H1 (cell line): ENCODE measurements at regions of chr14 and their contacts with region 1.

Region 1: GRCh38 chr14:103104654-103105452 is 10.3 kb downstream of the EXOC3L4 start:
- DNase-seq: peak in 1 of 2 experiments; percentile 93
- H3K4me3 ChIP-seq: peak overlapping the region in 3 of 4 experiments; percentile 15 to 39 (median 32); a peak in 4 of 8 replicates
- H3K27ac ChIP-seq: no peak overlapping the region
- H3K4me1 ChIP-seq: peaks cover 2 to 29% (median 19%) of the 10 kb centered on the region in 4 experiments
- H3K27me3 ChIP-seq: peaks cover 7 to 42% (median 34%) of the 10 kb centered on the region in 4 experiments
- CTCF ChIP-seq: peak in 2 of 3 experiments; percentile 86 to 94; a peak in 3 of 4 replicates
- EP300 ChIP-seq: no peak
- POLR2A ChIP-seq: no peak
- RAD21 ChIP-seq: peak; percentile 84 to 95

Region 2: DNA sequence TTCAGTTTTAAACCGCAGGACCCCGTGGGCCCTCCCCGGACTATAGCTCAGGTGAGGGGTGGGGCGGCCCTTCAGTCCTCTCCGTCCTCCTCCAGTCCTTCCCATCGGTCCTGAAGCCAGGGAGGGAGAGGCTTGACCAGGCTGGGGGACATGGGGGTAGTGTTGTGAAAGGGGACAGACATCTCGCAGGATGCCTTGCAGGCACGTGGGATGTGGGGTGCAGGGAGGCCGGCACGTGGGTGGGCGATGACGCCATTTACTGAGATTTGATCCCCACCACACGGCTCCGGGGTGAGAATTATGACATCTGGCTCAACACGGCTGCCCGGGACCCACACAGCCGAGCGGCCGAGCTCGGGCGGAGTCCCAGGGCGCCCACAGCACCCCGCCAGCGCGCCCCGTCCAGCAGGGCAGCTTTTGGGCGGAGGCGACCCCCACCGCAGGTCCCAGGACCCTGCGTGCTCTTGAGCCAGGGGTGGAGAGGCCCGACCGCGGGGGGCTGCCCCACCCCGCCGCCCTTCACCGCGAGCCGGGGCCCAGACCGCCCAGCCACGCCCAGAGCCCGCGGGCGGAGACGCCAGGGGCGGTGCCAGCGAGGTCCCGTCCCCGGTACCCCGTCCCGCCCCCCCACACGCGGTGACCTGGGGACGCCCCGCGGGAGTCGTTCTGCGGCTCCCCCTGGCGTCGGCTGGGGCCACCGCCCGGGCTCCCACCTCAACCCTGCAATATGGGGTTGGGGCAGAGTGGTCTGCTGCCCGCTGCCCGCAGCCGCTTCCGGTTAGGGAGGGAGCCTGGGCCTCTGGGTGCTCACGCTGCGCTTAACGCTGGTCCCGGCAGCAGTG is 13.6 kb before region 1 on chr14:
- CTCF ChIA-PET with region 1: interaction called, 58 read pairs
- POLR2A ChIA-PET with region 1: interaction called, 3 read pairs
- DNase-seq: peak in 1 of 2 experiments; percentile 76
- H3K4me3 ChIP-seq: peak overlapping the region; percentile 18 to 59 (median 30); a peak in 7 of 8 replicates
- H3K27ac ChIP-seq: no peak overlapping the region
- H3K4me1 ChIP-seq: peaks cover 2 to 13% (median 4%) of the 10 kb centered on the region in 4 experiments; a peak in 6 of 7 replicates
- H3K27me3 ChIP-seq: peaks cover 0 to 12% (median 6%) of the 10 kb centered on the region in 4 experiments; a peak in 4 of 7 replicates
- CTCF ChIP-seq: peak in 2 of 3 experiments; percentile 36 to 43; a peak in 3 of 4 replicates
- EP300 ChIP-seq: no peak
- POLR2A ChIP-seq: no peak
- RAD21 ChIP-seq: peak in 1 of 2 experiments; percentile 32; a peak in 1 of 4 replicates

Region 3: GRCh38 chr14:103151258-103151945 is 46.5 kb after region 1 on chr14:
- CTCF ChIA-PET with region 1: interaction called, 27 read pairs
- POLR2A ChIA-PET with region 1: no interaction called
- DNase-seq: no peak
- H3K4me3 ChIP-seq: no peak overlapping the region
- H3K27ac ChIP-seq: no peak overlapping the region
- H3K4me1 ChIP-seq: no peaks in the 10 kb centered on the region
- H3K27me3 ChIP-seq: no peaks in the 10 kb centered on the region
- CTCF ChIP-seq: no peak
- EP300 ChIP-seq: no peak
- POLR2A ChIP-seq: no peak
- RAD21 ChIP-seq: no peak

Region 4: GRCh38 chr14:103179094-103179493 is 74.2 kb after region 1 on chr14:
- CTCF ChIA-PET with region 1: interaction called, 28 read pairs
- POLR2A ChIA-PET with region 1: no interaction called
- DNase-seq: no peak
- H3K4me3 ChIP-seq: no peak overlapping the region
- H3K27ac ChIP-seq: no peak overlapping the region
- H3K4me1 ChIP-seq: no peaks in the 10 kb centered on the region
- H3K27me3 ChIP-seq: no peaks in the 10 kb centered on the region
- CTCF ChIP-seq: no peak
- EP300 ChIP-seq: no peak
- POLR2A ChIP-seq: no peak
- RAD21 ChIP-seq: no peak

Region 5: DNA sequence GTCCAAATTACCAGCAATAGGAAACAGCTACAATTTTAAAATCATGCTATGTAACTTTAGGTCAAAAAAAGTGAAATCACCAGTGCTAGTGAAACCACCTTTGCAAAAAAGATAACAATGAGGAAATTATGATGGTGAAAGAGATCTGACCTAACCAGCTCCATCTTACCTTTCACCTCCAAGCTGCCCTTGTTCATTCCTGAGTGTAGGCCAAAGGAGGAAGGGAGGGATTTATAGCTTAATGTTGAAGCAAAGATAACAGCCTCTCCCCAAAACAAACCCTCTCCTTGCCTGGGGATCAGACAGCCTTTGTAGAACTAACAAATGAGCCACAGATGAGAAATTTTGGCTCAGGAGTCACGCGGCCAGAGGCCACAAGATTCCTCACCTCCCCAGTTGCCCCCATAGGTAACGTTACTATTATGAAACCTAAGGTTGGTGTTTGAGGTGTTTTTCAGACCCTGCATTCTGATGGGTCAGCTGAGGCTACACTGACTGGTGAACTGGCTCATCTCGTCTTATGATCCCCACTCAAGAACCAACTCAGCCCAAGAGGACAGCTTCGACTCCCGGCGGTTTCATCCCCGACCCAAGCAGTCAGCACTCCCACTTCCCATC is 146.1 kb after region 1 on chr14:
- CTCF ChIA-PET with region 1: interaction called, 17 read pairs
- POLR2A ChIA-PET with region 1: no interaction called
- DNase-seq: no peak
- H3K4me3 ChIP-seq: no peak overlapping the region
- H3K27ac ChIP-seq: no peak overlapping the region
- H3K4me1 ChIP-seq: no peaks in the 10 kb centered on the region
- H3K27me3 ChIP-seq: no peaks in the 10 kb centered on the region
- CTCF ChIP-seq: no peak
- EP300 ChIP-seq: no peak
- POLR2A ChIP-seq: no peak
- RAD21 ChIP-seq: no peak

Region 6: GRCh38 chr14:103298620-103299019 is 193.8 kb after region 1 on chr14:
- CTCF ChIA-PET with region 1: interaction called, 128 read pairs
- POLR2A ChIA-PET with region 1: interaction called, 3 read pairs
- DNase-seq: peak in 1 of 2 experiments; percentile 17
- H3K4me3 ChIP-seq: no peak overlapping the region
- H3K27ac ChIP-seq: no peak overlapping the region
- H3K4me1 ChIP-seq: no peaks in the 10 kb centered on the region
- H3K27me3 ChIP-seq: no peaks in the 10 kb centered on the region
- CTCF ChIP-seq: no peak; a peak in 1 of 4 replicates
- EP300 ChIP-seq: no peak
- POLR2A ChIP-seq: no peak
- RAD21 ChIP-seq: no peak